Breast epithelium (tissue), 4 donors: ENCODE measurements at regions of chr9 and their contacts with region 1.

Region 1: GRCh38 chr9:134811673-134812342 is 68.8 kb upstream of the FCN2 start:
- DNase-seq: no peak
- H3K4me3 ChIP-seq: no peak overlapping the region
- H3K27ac ChIP-seq: peak overlapping the region in 1 of 2 donors; percentile 12
- H3K4me1 ChIP-seq: no peaks in the 10 kb centered on the region
- H3K27me3 ChIP-seq: no peaks in the 10 kb centered on the region
- CTCF ChIP-seq: no peak
- POLR2A ChIP-seq: no peak

Region 2: DNA sequence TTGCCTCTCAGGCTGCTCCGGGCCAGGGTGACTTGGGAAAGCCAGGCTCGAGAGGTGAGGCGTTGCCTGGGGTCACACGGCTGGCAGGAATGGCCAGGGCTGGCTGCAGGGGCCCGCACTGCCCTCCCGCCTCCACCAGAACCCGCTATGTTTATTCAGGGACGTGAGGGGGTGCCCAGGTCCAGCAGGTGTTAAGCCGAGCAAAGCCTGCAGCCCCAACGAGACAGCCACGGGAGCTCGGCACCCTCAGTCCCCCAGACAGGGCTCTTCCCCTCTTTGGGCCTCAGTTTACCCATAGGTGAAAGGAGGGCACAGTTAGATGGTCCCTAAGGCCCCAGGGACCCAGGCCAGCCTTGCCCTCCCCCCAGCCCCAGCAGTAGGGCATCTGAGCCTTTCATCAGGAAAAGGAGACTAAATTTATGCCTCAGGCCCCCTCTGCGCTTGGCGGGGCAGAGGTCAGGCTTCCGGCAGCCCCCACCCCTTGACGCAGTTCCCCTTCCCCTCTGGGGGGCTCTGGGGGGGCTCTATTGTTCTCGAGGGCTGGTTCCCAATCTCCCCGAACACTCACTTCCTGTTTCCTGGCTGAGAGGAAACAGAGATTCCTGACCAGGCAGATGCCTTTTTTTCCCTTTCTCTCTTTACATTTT is 1843.9 kb after region 1 on chr9:
- intact Hi-C with region 1: loop called (anchors 10 kb)
- DNase-seq: no peak
- H3K4me3 ChIP-seq: peak overlapping the region in 1 of 3 donors; percentile 45
- H3K27ac ChIP-seq: peak overlapping the region; percentile 10 to 83
- H3K4me1 ChIP-seq: no peaks in the 10 kb centered on the region
- H3K27me3 ChIP-seq: peaks cover 0 to 66% of the 10 kb centered on the region in 2 donors
- CTCF ChIP-seq: no peak
- POLR2A ChIP-seq: no peak